HepG2 (cell line): ENCODE measurements at regions of chr16 and their contacts with region 1.

Region 1: DNA sequence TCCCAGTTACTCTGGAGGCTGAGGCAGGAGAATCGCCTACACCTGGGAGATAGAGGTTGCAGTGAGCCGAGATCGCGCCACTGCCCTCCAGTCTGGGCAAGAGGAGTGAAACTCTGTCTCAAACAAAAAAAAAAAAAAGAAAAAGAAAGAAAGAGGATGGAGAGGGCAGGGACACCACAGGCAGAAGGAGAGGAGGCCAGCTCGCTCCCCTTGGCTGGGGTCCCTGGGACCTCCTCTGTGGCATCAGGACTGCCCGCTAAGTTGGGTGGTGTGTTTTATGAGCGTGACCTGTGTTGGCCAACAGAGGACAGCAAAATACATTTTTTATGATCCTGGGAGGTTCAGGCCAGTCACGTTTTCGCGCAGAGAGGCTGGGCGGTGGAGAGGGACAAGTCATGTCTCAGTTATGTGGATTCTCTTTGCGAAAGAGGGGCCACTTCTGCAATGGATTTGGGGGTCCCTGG is 229.6 kb downstream of the MRTFB start:
- DNase-seq: peak; percentile 88
- ATAC-seq: peak; percentile 65
- H3K4me3 ChIP-seq: peak overlapping the region; percentile 70 to 90 (median 77)
- H3K27ac ChIP-seq: no peak overlapping the region
- H3K4me1 ChIP-seq: peaks cover 48% of the 10 kb centered on the region
- H3K27me3 ChIP-seq: peaks cover 0 to 4% of the 10 kb centered on the region in 2 experiments; a peak in 3 of 5 replicates
- CTCF ChIP-seq: peak; percentile 97
- EP300 ChIP-seq: 0 out of 4 replicates have a peak, but pooled peaks of 1 of the 2 experiments have one; percentile 39
- POLR2A ChIP-seq: 0 out of 4 replicates have a peak, but pooled peaks of 1 of the 2 experiments have one; percentile 19
- RAD21 ChIP-seq: peak; percentile 85

Region 2: GRCh38 chr16:14249291-14250032 is 51.3 kb before region 1 on chr16:
- CTCF ChIA-PET with region 1: interaction called, 4 read pairs
- POLR2A ChIA-PET with region 1: no interaction called
- in situ Hi-C with region 1: no loop called
- intact Hi-C with region 1: loop called (anchors 1 kb)
- DNase-seq: peak; percentile 53
- ATAC-seq: 0 out of 3 replicates have a peak, but pooled peaks have one; percentile 27
- H3K4me3 ChIP-seq: no peak overlapping the region
- H3K27ac ChIP-seq: no peak overlapping the region
- H3K4me1 ChIP-seq: no peaks in the 10 kb centered on the region
- H3K27me3 ChIP-seq: no peaks in the 10 kb centered on the region
- CTCF ChIP-seq: peak; percentile 87
- EP300 ChIP-seq: no peak
- POLR2A ChIP-seq: no peak
- RAD21 ChIP-seq: peak; percentile 88

Region 3: GRCh38 chr16:14285513-14286385 is 15.0 kb before region 1 on chr16:
- CTCF ChIA-PET with region 1: no interaction called
- POLR2A ChIA-PET with region 1: interaction called, 13 read pairs
- in situ Hi-C with region 1: no loop called
- intact Hi-C with region 1: loop called (anchors 2 kb)
- DNase-seq: peak; percentile 95
- ATAC-seq: peak; percentile 84
- H3K4me3 ChIP-seq: peak overlapping the region; percentile 77 to 94 (median 89)
- H3K27ac ChIP-seq: peak overlapping the region; percentile 35
- H3K4me1 ChIP-seq: peaks cover 36% of the 10 kb centered on the region
- H3K27me3 ChIP-seq: no peaks in the 10 kb centered on the region; a peak in 1 of 5 replicates
- CTCF ChIP-seq: peak; percentile 34
- EP300 ChIP-seq: peak; percentile 30 to 67; a peak in 3 of 4 replicates
- POLR2A ChIP-seq: no peak
- RAD21 ChIP-seq: peak; percentile 79

Region 4: GRCh38 chr16:14364386-14365204 is 63.9 kb after region 1 on chr16:
- CTCF ChIA-PET with region 1: no interaction called
- POLR2A ChIA-PET with region 1: no interaction called
- in situ Hi-C with region 1: no loop called
- intact Hi-C with region 1: loop called (anchors 5 kb)
- DNase-seq: peak; percentile 99
- ATAC-seq: peak; percentile 85
- H3K4me3 ChIP-seq: peak overlapping the region; percentile 46 to 61 (median 49)
- H3K27ac ChIP-seq: peak overlapping the region; percentile 59
- H3K4me1 ChIP-seq: peaks cover 57% of the 10 kb centered on the region
- H3K27me3 ChIP-seq: no peaks in the 10 kb centered on the region
- CTCF ChIP-seq: peak; percentile 71
- EP300 ChIP-seq: peak; percentile 94 to 97
- POLR2A ChIP-seq: no peak; a peak in 1 of 4 replicates
- RAD21 ChIP-seq: peak; percentile 46

Region 5: DNA sequence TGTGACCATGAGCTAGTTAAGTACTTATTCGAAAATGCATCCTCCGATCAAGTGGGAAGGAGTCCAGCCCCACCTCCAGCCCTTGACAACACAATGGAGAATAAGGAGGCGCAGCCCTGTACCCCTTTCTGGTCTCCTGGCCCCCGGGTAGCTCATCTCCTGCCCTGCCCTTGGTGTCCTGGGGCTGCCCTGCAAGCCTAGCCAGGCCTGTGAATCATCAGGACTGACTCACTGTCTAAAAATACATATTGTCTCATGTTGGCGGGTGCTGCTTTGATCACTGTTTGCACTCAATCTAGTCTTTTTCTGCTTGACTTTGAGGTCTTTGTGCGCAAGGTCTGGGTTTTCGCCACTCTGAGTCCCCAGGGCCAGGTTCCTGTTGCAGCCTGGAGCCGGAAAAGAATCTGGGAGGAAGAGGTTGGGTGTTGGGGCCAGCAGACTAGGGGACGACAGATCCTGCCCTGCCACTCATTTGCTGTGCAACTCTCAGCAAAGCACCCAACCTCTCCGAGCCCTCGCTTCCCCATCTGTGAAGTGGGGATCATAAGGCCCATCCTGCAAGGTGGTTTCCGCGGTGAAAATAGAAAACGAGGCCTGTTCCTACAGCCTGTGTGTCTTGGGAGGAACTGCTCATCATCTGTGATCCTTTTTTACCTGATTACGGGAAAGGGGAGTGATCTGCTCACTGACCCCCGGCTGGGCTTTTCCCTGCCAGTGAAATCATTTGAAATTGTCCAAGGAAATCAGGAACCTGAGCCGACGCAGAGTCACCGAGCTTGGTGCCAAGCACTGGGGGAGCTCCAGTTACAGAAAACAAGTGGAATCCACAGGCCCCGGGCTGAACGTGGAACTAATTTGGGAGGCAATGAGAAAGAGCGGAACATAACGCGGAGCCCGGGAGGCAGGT is 98.9 kb after region 1 on chr16:
- CTCF ChIA-PET with region 1: no interaction called
- POLR2A ChIA-PET with region 1: no interaction called
- in situ Hi-C with region 1: no loop called
- intact Hi-C with region 1: loop called (anchors 5 kb)
- DNase-seq: peak; percentile 99
- ATAC-seq: peak; percentile 88
- H3K4me3 ChIP-seq: peak overlapping the region; percentile 31 to 67 (median 47)
- H3K27ac ChIP-seq: peak overlapping the region; percentile 95
- H3K4me1 ChIP-seq: peaks cover 96% of the 10 kb centered on the region
- H3K27me3 ChIP-seq: no peaks in the 10 kb centered on the region
- CTCF ChIP-seq: 0 out of 2 replicates have a peak, but pooled peaks have one; percentile 28
- EP300 ChIP-seq: peak; percentile 90 to 96
- POLR2A ChIP-seq: peak; percentile 82 to 84
- RAD21 ChIP-seq: no peak

Region 6: DNA sequence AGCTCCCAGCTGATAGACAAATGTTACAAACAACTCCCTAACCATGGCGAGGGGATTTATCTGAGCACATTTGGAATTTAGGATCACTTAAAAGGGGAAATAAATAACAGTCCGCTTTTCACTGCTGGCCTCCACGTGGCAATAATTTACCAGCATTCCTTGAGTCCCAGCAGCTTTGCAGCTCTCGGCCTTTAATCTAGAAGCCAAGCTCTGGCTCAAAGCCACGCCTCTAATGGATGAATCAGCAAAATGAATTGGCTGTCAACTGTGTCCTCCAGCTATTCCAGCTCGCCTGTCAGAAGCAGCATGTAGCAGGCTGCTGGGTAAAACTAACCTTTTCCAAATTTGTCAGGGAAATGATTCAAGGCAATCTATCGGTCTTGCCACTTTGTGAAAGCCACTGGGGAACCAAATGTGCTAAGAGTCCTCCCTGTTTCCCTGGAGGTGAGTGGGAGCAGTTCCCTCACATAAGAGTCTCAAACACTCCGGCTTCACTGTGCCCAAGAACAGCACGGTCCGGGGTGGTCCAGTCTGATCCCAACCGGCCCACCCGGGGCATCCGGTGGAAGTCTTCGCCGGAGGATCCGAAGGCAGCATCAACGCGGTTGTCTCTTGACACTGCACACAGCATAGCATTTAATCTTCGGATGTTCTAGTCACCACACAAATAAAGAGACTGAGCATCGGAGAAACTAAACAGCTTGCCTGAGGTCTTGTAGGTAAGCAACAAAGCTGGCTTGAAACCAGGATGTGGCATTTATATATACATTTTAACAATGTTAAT is 186.0 kb after region 1 on chr16:
- CTCF ChIA-PET with region 1: no interaction called
- POLR2A ChIA-PET with region 1: interaction called, 3 read pairs
- in situ Hi-C with region 1: no loop called
- intact Hi-C with region 1: loop called (anchors 5 kb)
- DNase-seq: peak; percentile 98
- ATAC-seq: peak; percentile 95
- H3K4me3 ChIP-seq: peak overlapping the region; percentile 44 to 62 (median 49)
- H3K27ac ChIP-seq: peak overlapping the region; percentile 78
- H3K4me1 ChIP-seq: peaks cover 71% of the 10 kb centered on the region
- H3K27me3 ChIP-seq: no peaks in the 10 kb centered on the region
- CTCF ChIP-seq: peak; percentile 30; the same call in 1 of the 2 replicates
- EP300 ChIP-seq: peak in 1 of 2 experiments; percentile 74; a peak in 1 of 4 replicates
- POLR2A ChIP-seq: peak; percentile 58 to 87; a peak in 3 of 4 replicates
- RAD21 ChIP-seq: no peak; the same call in 1 of the 2 replicates